Right ventricle myocardium inferior (tissue), 1 donor: ENCODE measurements at regions of chr13 and their contacts with region 1.

Region 1: DNA sequence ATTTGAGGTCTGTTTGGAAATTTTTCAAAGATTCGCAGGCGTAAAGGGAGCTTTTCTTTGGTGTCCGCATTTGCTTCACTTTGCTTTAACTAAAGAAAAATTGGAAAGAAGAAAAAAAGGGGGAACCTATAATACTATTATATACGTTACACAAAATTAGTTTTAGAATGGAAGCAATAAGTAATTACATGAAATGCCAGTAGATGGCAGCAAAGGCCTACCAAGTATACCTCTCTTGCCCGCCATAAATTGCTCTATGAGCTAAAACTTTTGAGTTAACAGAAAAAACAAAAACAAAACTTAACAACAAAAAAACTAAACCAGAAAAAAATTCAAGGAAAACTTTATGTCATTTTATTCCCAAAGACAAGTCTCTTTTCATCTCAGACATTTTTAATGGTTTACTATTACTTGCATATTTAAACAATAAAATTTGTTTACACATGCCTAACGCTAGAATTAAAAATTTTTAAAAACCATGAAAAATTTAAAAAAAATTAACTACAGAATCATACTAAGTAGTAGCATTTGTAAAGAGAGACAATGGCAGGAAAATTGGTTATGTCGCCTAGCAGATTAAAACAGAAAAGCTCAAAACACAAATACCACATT is 271.4 kb downstream of the NALCN start:
- DNase-seq: no peak
- ATAC-seq: no peak

Region 2: GRCh38 chr13:101474419-101474957 is 329.6 kb after region 1 on chr13:
- intact Hi-C with region 1: loop called (anchors 10 kb)
- DNase-seq: no peak
- ATAC-seq: peak; percentile 59

Region 3: DNA sequence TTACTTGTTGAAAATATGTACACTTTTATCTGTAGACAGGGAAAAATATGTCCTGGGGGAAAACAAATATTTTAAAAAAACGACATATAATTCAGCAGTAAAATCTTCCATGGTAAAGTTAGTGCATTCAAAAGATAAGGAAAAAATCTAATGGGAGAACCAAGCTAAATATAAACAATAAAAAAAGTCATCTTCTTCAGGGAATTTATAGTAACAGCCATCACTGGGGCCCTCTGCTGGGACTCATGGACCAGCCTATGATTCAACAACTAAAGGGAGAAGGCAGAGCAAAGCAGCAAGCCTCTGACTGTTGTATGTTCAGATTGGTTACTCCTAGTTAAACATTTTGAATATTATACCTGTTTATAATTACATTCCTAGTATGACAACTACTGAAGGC is 400.6 kb after region 1 on chr13:
- intact Hi-C with region 1: loop called (anchors 10 kb)
- DNase-seq: no peak
- ATAC-seq: no peak

Region 4: GRCh38 chr13:101757446-101758039 is 612.6 kb after region 1 on chr13:
- intact Hi-C with region 1: loop called (anchors 10 kb)
- DNase-seq: no peak
- ATAC-seq: no peak